Caco-2 (cell line): ENCODE measurements at regions of chr6 and their contacts with region 1.

Region 1: GRCh38 chr6:85163156-85164080 is 286.5 kb upstream of the NT5E start:
- DNase-seq: no peak
- H3K4me3 ChIP-seq: no peak overlapping the region
- H3K4me3 Mint-ChIP-seq: no peak overlapping the region
- H3K27ac Mint-ChIP-seq: no peak overlapping the region
- H3K4me1 ChIP-seq: no peaks in the 10 kb centered on the region
- H3K4me1 Mint-ChIP-seq: no peaks in the 10 kb centered on the region
- H3K27me3 ChIP-seq: no peaks in the 10 kb centered on the region
- H3K27me3 Mint-ChIP-seq: peaks cover 10% of the 10 kb centered on the region
- CTCF ChIP-seq: no peak

Region 2: GRCh38 chr6:84815896-84816735 is 347.3 kb before region 1 on chr6:
- CTCF ChIA-PET with region 1: no interaction called
- POLR2A ChIA-PET with region 1: no interaction called
- intact Hi-C with region 1: no loop called
- DNase-seq: no peak
- H3K4me3 ChIP-seq: no peak overlapping the region
- H3K4me3 Mint-ChIP-seq: no peak overlapping the region
- H3K27ac Mint-ChIP-seq: no peak overlapping the region
- H3K4me1 ChIP-seq: no peaks in the 10 kb centered on the region
- H3K4me1 Mint-ChIP-seq: no peaks in the 10 kb centered on the region
- H3K27me3 ChIP-seq: no peaks in the 10 kb centered on the region
- H3K27me3 Mint-ChIP-seq: peaks cover 2% of the 10 kb centered on the region
- CTCF ChIP-seq: no peak

Region 3: DNA sequence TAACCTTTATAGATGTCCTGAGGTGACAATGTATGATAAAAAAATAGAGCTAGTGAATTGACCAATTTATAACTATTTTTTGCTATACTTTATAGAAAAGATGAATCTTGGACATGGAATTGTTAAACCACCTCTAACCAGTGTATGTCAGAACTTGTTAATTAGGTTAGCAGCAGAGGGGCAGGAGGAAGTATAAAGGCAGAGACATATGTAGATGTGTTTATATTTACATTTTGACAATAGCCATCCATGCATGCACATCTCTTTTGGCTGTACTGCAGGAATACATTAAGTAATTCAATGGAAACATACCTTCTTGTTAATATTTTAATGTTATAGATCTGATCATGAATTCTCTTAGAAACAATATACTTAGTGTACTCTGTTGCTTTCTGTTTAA is 31.8 kb after region 1 on chr6:
- CTCF ChIA-PET with region 1: no interaction called
- POLR2A ChIA-PET with region 1: no interaction called
- intact Hi-C with region 1: loop called (anchors 1 kb)
- DNase-seq: no peak
- H3K4me3 ChIP-seq: no peak overlapping the region
- H3K4me3 Mint-ChIP-seq: no peak overlapping the region
- H3K27ac Mint-ChIP-seq: no peak overlapping the region
- H3K4me1 ChIP-seq: peaks cover 5% of the 10 kb centered on the region; the same call in 1 of the 2 replicates
- H3K4me1 Mint-ChIP-seq: no peaks in the 10 kb centered on the region
- H3K27me3 ChIP-seq: no peaks in the 10 kb centered on the region
- H3K27me3 Mint-ChIP-seq: peaks cover 4% of the 10 kb centered on the region
- CTCF ChIP-seq: no peak